PC-9 (cell line): ENCODE measurements at regions of chr2 and their contacts with region 1.

Region 1: DNA sequence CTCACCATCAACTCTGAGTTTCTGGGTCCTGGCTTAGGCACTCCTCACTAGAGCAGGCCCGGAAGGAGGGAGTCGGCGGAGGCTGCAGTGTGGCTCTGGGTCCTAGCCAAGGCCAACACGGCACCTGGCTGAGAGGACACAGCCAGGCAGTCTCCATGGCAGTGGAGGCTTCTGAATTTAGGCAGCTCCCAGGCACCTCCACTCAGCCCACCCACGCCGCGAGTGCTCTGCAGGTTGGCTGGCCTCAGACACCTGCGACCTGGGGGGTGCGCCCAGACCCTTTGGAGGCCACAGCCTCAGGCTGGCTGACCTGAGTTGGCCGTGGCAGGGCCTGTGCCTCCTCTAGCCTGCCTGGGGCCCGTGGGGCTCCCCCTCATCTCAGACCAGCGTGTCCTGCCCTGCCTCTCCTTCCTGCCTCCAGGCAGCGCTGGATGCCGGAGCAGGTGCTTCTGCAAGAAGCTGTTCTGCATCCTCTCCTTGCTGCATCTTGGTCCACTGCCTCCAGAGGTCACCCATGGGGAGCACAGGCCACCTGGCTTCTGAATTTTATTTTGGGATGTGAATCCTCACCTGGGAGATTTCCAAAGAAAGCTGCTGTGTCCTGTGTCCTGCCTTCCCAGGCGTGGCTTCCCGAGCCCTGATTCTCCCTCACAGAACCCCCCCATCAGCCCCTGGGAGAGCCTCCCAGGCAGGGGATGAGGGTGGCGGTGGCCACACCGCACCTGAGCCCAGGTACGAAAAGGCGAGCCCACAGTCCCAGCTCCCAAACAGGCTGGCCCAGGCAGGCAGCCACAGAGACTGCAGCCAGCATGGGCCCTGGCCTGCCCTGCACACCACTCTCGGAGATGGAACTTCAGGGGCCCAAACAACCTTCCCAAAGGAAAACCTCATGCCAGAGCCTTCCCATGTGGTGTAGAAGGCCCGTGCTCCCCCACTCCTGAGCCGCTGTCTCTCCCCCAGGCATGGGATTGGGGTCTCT is 23.4 kb downstream of the AQP12A start:
- DNase-seq: no peak
- H3K4me3 ChIP-seq: no peak overlapping the region
- H3K27ac ChIP-seq: no peak overlapping the region
- H3K4me1 ChIP-seq: no peaks in the 10 kb centered on the region
- H3K27me3 ChIP-seq: peaks cover 98% of the 10 kb centered on the region
- CTCF ChIP-seq: no peak; the same call in 1 of the 2 replicates

Region 2: GRCh38 chr2:239991689-239992314 is 723.2 kb before region 1 on chr2:
- CTCF ChIA-PET with region 1: no interaction called
- POLR2A ChIA-PET with region 1: no interaction called
- intact Hi-C with region 1: no loop called
- DNase-seq: peak in 1 of 2 experiments; percentile 50
- H3K4me3 ChIP-seq: no peak overlapping the region
- H3K27ac ChIP-seq: no peak overlapping the region
- H3K4me1 ChIP-seq: no peaks in the 10 kb centered on the region
- H3K27me3 ChIP-seq: no peaks in the 10 kb centered on the region
- CTCF ChIP-seq: peak; percentile 98

Region 3: DNA sequence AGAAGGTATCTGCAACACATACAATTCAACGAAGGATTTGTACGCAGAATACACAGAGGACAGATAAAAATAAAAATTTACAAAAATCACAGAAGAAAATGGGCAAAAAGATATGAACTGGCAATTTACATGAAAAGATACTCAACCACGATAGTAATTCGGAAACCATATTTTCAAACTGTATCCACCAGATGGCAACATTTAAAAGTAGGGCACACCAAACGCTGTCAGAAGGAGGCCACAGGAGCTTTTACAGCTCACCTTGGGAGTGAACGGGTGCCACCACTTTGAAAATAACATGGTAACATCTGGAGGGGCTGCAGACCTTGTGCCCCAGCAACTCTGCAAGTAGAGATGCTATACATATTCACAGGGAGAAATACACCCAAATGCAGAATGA is 95.2 kb after region 1 on chr2:
- CTCF ChIA-PET with region 1: no interaction called
- POLR2A ChIA-PET with region 1: interaction called, 16 read pairs
- intact Hi-C with region 1: no loop called
- DNase-seq: no peak
- H3K4me3 ChIP-seq: no peak overlapping the region
- H3K27ac ChIP-seq: no peak overlapping the region
- H3K4me1 ChIP-seq: no peaks in the 10 kb centered on the region
- H3K27me3 ChIP-seq: peaks cover 82% of the 10 kb centered on the region
- CTCF ChIP-seq: peak; percentile 61; the same call in 1 of the 2 replicates